WTC11 (cell line): ENCODE measurements at regions of chr12 and their contacts with region 1.

Region 1: GRCh38 chr12:94101738-94102660 is 46.4 kb upstream of the PLXNC1 start:
- DNase-seq: peak; percentile 88
- ATAC-seq: peak; percentile 81
- H3K4me3 Mint-ChIP-seq: peak overlapping the region; percentile 75
- H3K27ac Mint-ChIP-seq: no peak overlapping the region
- H3K4me1 Mint-ChIP-seq: peaks cover 9% of the 10 kb centered on the region
- H3K27me3 Mint-ChIP-seq: peaks cover 34% of the 10 kb centered on the region
- CTCF ChIP-seq: peak; percentile 58

Region 2: GRCh38 chr12:93514853-93515252 is 587.1 kb before region 1 on chr12:
- CTCF ChIA-PET with region 1: interaction called, 12 read pairs
- POLR2A ChIA-PET with region 1: interaction called, 3 read pairs
- DNase-seq: no peak
- ATAC-seq: no peak
- H3K4me3 Mint-ChIP-seq: no peak overlapping the region
- H3K27ac Mint-ChIP-seq: no peak overlapping the region
- H3K4me1 Mint-ChIP-seq: no peaks in the 10 kb centered on the region
- H3K27me3 Mint-ChIP-seq: no peaks in the 10 kb centered on the region
- CTCF ChIP-seq: no peak

Region 3: GRCh38 chr12:93569656-93570551 is 532.1 kb before region 1 on chr12:
- CTCF ChIA-PET with region 1: interaction called, 69 read pairs
- POLR2A ChIA-PET with region 1: interaction called, 4 read pairs
- DNase-seq: peak; percentile 92
- ATAC-seq: peak; percentile 69
- H3K4me3 Mint-ChIP-seq: peak overlapping the region; percentile 85
- H3K27ac Mint-ChIP-seq: peak overlapping the region; percentile 90
- H3K4me1 Mint-ChIP-seq: peaks cover 13% of the 10 kb centered on the region
- H3K27me3 Mint-ChIP-seq: peaks cover 26% of the 10 kb centered on the region
- CTCF ChIP-seq: peak; percentile 76

Region 4: GRCh38 chr12:93802698-93803423 is 299.1 kb before region 1 on chr12:
- CTCF ChIA-PET with region 1: interaction called, 14 read pairs
- POLR2A ChIA-PET with region 1: no interaction called
- DNase-seq: no peak
- ATAC-seq: no peak; the same call in 1 of the 2 replicates
- H3K4me3 Mint-ChIP-seq: no peak overlapping the region
- H3K27ac Mint-ChIP-seq: no peak overlapping the region
- H3K4me1 Mint-ChIP-seq: peaks cover 30% of the 10 kb centered on the region
- H3K27me3 Mint-ChIP-seq: no peaks in the 10 kb centered on the region
- CTCF ChIP-seq: no peak

Region 5: GRCh38 chr12:93894391-93895088 is 207.5 kb before region 1 on chr12:
- CTCF ChIA-PET with region 1: interaction called, 67 read pairs
- POLR2A ChIA-PET with region 1: no interaction called
- DNase-seq: no peak
- ATAC-seq: no peak; the same call in 1 of the 2 replicates
- H3K4me3 Mint-ChIP-seq: no peak overlapping the region
- H3K27ac Mint-ChIP-seq: no peak overlapping the region
- H3K4me1 Mint-ChIP-seq: peaks cover 37% of the 10 kb centered on the region
- H3K27me3 Mint-ChIP-seq: no peaks in the 10 kb centered on the region
- CTCF ChIP-seq: no peak

Region 6: DNA sequence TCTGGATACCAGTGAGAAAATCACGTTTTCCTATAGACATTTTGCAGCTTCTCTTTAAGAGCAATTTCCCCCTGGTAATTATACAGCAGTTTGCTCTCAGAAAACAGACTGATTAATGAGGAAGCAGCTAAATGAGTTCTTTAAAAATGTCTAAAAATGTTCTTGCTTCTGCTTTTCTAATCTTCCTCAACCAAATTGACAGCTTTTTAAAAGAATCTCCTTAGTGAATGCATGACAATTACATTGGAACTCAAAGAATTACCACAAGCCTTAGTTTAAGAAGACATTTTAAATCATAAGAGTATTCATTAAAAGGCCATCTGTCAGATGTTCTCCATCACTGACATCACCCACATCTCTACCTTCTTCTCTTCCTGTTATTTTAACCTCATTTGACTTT is 89.4 kb before region 1 on chr12:
- CTCF ChIA-PET with region 1: interaction called, 12 read pairs
- POLR2A ChIA-PET with region 1: no interaction called
- DNase-seq: no peak
- ATAC-seq: no peak
- H3K4me3 Mint-ChIP-seq: no peak overlapping the region
- H3K27ac Mint-ChIP-seq: no peak overlapping the region
- H3K4me1 Mint-ChIP-seq: peaks cover 31% of the 10 kb centered on the region
- H3K27me3 Mint-ChIP-seq: peaks cover 7% of the 10 kb centered on the region
- CTCF ChIP-seq: no peak

Region 7: GRCh38 chr12:94126067-94126466 is 24.1 kb after region 1 on chr12:
- CTCF ChIA-PET with region 1: interaction called, 17 read pairs
- POLR2A ChIA-PET with region 1: no interaction called
- DNase-seq: no peak
- ATAC-seq: no peak
- H3K4me3 Mint-ChIP-seq: no peak overlapping the region
- H3K27ac Mint-ChIP-seq: no peak overlapping the region
- H3K4me1 Mint-ChIP-seq: peaks cover 13% of the 10 kb centered on the region
- H3K27me3 Mint-ChIP-seq: no peaks in the 10 kb centered on the region; the same call in none of the 2 replicates
- CTCF ChIP-seq: no peak

Region 8: DNA sequence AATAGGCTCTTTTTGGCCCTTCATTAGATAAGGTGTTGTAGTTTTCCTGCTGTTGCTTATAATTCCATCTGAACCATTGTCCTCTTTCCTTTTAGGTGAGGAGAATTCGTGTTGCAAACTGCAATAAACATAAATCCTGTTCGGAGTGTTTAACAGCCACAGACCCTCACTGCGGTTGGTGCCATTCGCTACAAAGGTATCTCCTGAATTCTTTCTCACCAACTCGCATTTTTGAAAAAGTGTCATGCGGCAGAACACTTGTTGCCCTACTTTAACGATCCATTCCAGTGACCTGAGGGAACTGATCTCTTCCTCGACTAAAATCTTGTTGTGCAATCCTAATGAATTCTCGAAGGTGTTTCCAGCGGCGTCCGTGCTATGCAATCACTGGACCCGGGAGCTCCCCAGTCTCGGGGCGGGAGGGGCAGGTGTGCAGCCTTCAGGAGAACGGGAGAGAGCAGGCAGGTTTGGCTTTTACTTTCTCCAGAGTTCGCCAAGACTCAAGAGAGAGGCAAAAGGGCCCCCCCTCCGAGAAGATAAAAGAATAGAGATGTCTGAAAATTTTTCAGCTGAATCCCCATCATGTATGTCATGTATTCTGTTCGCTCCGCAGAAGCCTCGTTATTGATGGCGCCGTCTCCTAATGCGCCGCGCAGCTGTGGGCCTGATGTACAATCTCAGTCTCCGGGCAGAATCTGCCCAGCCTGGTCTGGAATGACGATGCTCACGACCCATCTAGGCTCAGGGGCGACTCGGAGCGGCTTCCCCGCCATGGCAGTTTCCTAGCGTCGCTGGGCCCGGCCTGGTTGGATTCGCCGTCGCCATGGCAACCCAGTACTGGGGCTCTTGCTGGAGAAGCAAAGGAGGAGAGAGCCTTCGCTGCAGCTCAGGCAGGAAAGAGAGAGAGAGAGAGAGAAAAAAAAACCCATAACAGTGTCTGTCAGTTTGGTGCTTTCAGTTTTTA is 84.6 kb after region 1 on chr12:
- CTCF ChIA-PET with region 1: no interaction called
- POLR2A ChIA-PET with region 1: no interaction called
- DNase-seq: peak; percentile 91
- ATAC-seq: peak; percentile 97
- H3K4me3 Mint-ChIP-seq: no peak overlapping the region
- H3K27ac Mint-ChIP-seq: no peak overlapping the region
- H3K4me1 Mint-ChIP-seq: peaks cover 4% of the 10 kb centered on the region
- H3K27me3 Mint-ChIP-seq: peaks cover 16% of the 10 kb centered on the region
- CTCF ChIP-seq: no peak

Region 9: DNA sequence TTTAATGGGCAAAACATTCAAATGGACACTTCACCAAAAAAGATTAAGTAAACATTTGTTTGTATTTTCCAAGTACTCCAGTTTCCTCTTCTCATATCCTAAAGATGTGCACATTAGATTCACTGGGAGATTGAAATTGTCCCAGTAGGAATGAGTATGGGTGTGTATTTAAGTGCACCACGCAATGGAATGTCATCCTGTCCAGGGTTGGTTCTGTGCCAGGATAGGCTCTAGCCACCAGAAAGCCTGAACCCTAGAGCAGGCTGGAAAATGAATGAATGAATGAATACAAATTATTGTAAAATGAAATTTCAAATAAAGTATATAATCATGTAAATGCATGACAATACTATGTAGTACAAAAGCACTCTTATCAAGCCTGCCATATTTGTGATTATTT is 343.7 kb after region 1 on chr12:
- CTCF ChIA-PET with region 1: no interaction called
- POLR2A ChIA-PET with region 1: no interaction called
- DNase-seq: no peak
- ATAC-seq: no peak
- H3K4me3 Mint-ChIP-seq: no peak overlapping the region
- H3K27ac Mint-ChIP-seq: no peak overlapping the region
- H3K4me1 Mint-ChIP-seq: peaks cover 2% of the 10 kb centered on the region
- H3K27me3 Mint-ChIP-seq: no peaks in the 10 kb centered on the region
- CTCF ChIP-seq: no peak